RWPE1 (cell line): ENCODE measurements at regions of chr4 and their contacts with region 1.

Region 1: DNA sequence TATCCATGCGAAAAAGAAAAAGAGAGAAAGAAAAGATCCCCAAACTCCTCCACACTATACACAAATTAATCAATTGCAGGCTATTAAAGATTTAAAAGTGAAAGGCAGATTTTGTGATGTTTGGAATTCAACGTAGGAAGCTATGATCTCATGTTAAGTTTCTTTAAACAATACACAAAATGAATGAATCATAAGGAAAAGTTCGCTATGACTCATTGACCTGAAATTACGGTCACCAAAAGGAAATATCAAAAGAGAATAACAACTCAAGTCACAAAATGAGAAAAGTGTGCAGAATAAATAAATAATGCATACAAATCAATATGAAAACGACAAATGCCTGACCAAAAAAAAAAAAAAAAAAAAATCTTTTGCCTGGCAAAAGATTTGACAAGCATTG is 28.6 kb downstream of the CLNK start:
- DNase-seq: peak; percentile 20
- H3K27ac ChIP-seq: no peak overlapping the region
- CTCF ChIP-seq: no peak

Region 2: GRCh38 chr4:10517671-10518070 is 138.3 kb before region 1 on chr4:
- CTCF ChIA-PET with region 1: interaction called, 12 read pairs
- POLR2A ChIA-PET with region 1: no interaction called
- DNase-seq: no peak
- H3K27ac ChIP-seq: no peak overlapping the region
- CTCF ChIP-seq: no peak

Region 3: DNA sequence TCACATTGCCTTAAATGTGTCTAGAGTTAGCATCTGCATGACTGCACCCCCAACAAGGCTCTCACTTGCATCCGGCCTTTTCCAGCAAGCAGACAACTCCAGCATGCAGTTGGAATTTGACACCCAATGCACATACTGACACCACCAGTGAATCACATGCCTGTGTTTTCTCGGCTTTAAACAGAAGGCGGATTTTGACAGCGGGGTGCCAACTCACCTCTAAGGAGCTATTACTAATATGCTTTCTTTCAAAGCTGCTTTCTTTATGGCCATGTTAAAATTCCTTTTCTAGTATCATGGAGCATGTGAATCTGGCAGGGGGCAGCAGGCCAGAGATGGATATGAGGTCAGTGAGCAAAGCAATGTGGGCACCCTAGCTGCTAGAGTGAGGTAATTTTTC is 106.6 kb after region 1 on chr4:
- CTCF ChIA-PET with region 1: no interaction called
- POLR2A ChIA-PET with region 1: no interaction called
- DNase-seq: no peak
- H3K27ac ChIP-seq: no peak overlapping the region
- CTCF ChIP-seq: no peak

Region 4: DNA sequence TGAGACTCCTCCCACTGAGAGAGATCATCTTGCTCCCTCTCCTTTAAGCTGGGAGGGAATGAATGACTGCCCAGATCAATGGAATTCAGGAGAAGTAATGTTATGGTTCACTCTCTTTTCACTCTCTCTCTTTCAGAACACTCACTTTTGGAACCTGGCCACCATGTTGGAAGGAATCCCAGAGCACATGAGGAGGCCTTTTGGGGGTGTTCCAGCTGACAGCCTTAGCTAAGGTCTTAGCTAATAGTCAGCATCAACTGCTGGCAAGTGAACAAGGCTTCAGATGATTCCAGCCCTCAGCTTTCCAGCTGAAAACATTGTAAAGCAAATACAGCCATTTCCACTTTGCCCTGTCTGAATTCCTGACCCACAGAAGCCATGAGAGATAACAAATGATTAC is 152.6 kb after region 1 on chr4:
- CTCF ChIA-PET with region 1: no interaction called
- POLR2A ChIA-PET with region 1: no interaction called
- DNase-seq: no peak
- H3K27ac ChIP-seq: no peak overlapping the region
- CTCF ChIP-seq: no peak